Kidney (tissue), 22 donors: ENCODE measurements at regions of chr12 and their contacts with region 1.

Region 1: DNA sequence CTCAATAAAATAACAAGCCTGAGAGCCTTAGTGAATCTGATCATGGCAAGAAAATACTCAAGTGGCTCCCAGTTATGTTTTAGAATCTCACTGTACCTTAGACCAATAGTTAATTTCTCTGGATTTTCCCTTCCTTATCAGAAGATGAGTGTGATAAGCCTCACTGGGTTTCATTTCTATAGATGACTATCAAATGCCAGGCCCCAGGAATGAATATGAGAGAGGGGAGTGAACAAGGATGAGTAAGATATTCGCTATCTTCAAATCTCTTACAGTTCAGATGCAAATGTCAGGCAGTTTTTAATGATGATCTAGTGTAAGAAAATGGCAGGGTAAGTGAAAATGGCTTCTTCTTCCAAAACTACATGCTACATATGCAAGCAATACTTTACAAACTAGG is 26.1 kb upstream of the OR10P1 start:
- DNase-seq: no peak
- H3K4me3 ChIP-seq: no peak overlapping the region
- H3K27ac ChIP-seq: no peak overlapping the region
- H3K4me1 ChIP-seq: no peaks in the 10 kb centered on the region
- H3K27me3 ChIP-seq: no peaks in the 10 kb centered on the region
- CTCF ChIP-seq: no peak

Region 2: DNA sequence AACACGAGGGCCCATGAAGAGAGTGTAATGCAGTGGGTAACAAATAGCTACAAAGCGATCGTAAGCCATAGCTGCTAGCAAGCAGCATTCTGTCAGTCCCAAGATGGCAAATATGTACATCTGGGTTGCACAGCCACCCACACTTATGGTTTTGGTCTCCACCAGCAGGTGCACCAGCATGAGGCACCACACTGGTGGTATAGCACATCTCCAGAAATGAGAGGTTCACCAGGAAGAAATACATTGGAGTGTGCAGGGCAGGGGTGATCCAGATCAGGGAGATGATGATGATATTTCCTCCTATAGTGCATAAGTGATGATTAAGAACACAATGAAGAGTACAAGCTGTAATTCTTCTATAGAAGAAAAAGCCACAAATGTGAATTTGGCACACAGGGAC is 416.2 kb before region 1 on chr12:
- intact Hi-C with region 1: loop called (anchors 5 kb)
- DNase-seq: no peak
- H3K4me3 ChIP-seq: no peak overlapping the region
- H3K27ac ChIP-seq: no peak overlapping the region
- H3K4me1 ChIP-seq: no peaks in the 10 kb centered on the region
- H3K27me3 ChIP-seq: no peaks in the 10 kb centered on the region
- CTCF ChIP-seq: no peak

Region 3: GRCh38 chr12:55548756-55549155 is 61.8 kb before region 1 on chr12:
- intact Hi-C with region 1: no loop called
- DNase-seq: no peak
- H3K4me3 ChIP-seq: no peak overlapping the region
- H3K27ac ChIP-seq: no peak overlapping the region
- H3K4me1 ChIP-seq: no peaks in the 10 kb centered on the region
- H3K27me3 ChIP-seq: no peaks in the 10 kb centered on the region
- CTCF ChIP-seq: no peak

Region 4: DNA sequence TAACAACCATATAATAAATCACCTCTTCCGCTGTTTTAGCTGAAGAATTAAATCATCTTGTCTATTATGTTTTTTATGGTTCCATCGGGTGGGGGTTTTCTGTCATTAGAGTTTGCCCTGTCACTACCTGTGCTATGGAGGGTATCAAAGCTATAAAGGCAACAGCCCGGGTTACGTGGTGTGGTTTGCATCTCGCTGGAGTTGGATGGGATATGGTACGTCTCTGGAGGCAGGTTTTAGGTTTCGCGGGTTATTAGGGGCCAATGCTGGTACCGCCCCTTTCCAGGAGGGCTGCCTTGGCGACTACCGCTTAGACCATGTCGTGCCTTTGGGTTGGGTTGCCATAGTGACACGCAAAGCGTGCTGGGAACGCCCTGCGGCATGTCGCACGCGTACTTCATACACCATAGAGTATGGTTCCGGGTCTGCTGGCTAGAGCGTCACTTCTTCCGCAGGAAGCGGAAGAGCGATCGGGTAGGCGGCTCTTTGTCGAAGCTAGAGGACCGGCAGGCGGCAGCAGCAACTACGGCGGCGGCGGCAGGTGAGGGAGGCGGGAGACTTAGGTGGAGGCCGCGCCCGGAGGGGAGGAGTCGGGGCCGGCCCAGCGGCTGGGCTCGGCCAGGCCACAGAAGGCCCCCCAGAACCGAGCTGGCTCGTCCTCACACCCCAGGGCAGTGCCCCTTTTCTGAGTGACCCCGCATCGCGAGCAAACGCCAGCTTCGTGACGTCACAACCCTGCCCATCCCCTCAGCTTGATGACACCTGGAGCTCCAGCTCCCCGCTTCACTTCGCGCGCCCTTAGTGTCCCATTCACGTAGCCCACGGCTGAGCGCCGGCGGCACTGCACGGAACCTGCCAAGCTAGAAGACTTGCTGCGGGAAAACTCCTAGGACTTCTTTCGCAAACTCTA is 507.4 kb after region 1 on chr12 and contains the start of gene ZC3H10:
- intact Hi-C with region 1: no loop called
- DNase-seq: peak; percentile 99
- H3K4me3 ChIP-seq: peak within 1 kb of the TSS; percentile 91 to 99 (median 99)
- H3K27ac ChIP-seq: peak within 1 kb of the TSS; percentile 87 to 97
- H3K4me1 ChIP-seq: peaks cover 0 to 19% (median 15%) of the 10 kb centered on the region in 3 donors
- H3K27me3 ChIP-seq: no peaks in the 10 kb centered on the region
- CTCF ChIP-seq: peak; percentile 60
- total RNA-seq, gene ZC3H10: 8.6 TPM